ENCODE measurements at regions of chr7 and their contacts with region 1.

Region 1: DNA sequence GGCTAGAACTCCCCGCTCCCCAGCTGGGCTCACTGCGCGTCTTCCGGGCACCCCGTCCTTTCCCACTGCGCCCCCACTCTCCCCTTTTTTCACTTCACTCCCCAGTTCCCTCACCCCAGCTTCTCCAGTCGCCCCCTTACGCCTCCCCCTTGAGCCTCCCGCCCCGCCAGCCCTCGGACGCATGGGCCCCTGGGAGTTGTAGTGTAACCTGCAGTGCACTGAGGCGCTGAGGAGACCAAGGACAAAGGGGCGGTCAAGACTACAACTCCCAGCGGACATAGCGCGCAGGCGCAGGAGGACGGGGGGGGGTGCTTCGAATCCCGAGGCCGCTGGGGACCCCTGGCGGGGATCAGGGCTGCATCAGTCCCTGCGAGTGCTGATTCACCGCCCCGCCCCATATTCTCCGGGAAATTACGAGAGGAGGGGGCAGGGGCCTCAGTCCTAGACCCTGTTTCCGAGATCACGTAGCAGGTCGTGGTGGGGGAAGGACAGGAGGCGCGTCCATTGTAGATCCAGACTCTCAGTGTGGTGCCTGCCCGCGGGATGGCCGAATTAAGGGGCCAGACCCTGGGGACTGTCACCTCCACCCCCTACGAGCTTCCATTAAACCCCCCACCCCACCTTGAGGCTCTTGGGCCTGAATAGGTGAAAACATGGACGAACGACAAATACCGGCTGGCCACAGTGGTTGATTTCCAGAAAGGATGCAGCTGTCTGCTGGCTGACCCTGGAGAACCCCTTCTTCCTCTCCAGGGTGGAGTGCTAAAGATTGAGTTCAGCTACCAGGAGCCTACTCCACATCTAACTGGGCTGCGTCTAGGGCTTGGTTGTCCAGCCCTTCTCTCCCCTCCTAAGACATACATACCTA is 554 bp upstream of the YWHAG start:
- DNase-seq: peak; percentile 85
- ATAC-seq: peak; percentile 95
- H3K4me3 ChIP-seq: peak overlapping the region; percentile 99
- H3K27ac ChIP-seq: peak overlapping the region; percentile 96
- H3K4me1 ChIP-seq: peaks cover 10% of the 10 kb centered on the region
- H3K27me3 ChIP-seq: no peaks in the 10 kb centered on the region
- CTCF ChIP-seq: peak; percentile 74 to 90 (median 80)
- EP300 ChIP-seq: no peak
- POLR2A ChIP-seq: no peak
- RAD21 ChIP-seq: peak; percentile 49; the same call in 1 of the 2 replicates

Region 2: GRCh38 chr7:75842836-75843446 is 516.4 kb before region 1 on chr7:
- CTCF ChIA-PET with region 1: no interaction called
- POLR2A ChIA-PET with region 1: no interaction called
- RAD21 ChIA-PET with region 1: no interaction called
- SMC1A ChIA-PET with region 1: no interaction called
- in situ Hi-C with region 1: no loop called
- intact Hi-C with region 1: no loop called
- DNase-seq: peak; percentile 47
- ATAC-seq: peak; percentile 95
- H3K4me3 ChIP-seq: 0 out of 2 replicates have a peak overlapping the region, but pooled peaks have one; percentile 10
- H3K27ac ChIP-seq: peak overlapping the region; percentile 72
- H3K4me1 ChIP-seq: peaks cover 12% of the 10 kb centered on the region
- H3K27me3 ChIP-seq: no peaks in the 10 kb centered on the region
- CTCF ChIP-seq: no peak
- EP300 ChIP-seq: peak in 1 of 2 experiments; percentile 66; a peak in 2 of 4 replicates
- POLR2A ChIP-seq: 0 out of 2 replicates have a peak, but pooled peaks have one; percentile 40
- RAD21 ChIP-seq: no peak; the same call in 1 of the 2 replicates

Region 3: GRCh38 chr7:76291343-76292212 is 67.8 kb before region 1 on chr7:
- CTCF ChIA-PET with region 1: interaction called, 14 read pairs
- POLR2A ChIA-PET with region 1: no interaction called
- RAD21 ChIA-PET with region 1: no interaction called
- SMC1A ChIA-PET with region 1: no interaction called
- in situ Hi-C with region 1: no loop called
- intact Hi-C with region 1: no loop called
- DNase-seq: peak; percentile 77
- ATAC-seq: peak; percentile 93
- H3K4me3 ChIP-seq: no peak overlapping the region
- H3K27ac ChIP-seq: peak overlapping the region; percentile 13
- H3K4me1 ChIP-seq: peaks cover 6% of the 10 kb centered on the region
- H3K27me3 ChIP-seq: no peaks in the 10 kb centered on the region
- CTCF ChIP-seq: peak; percentile 95 to 98 (median 98); a peak in 5 of 6 replicates
- EP300 ChIP-seq: 0 out of 4 replicates have a peak, but pooled peaks of 1 of the 2 experiments have one; percentile 16
- POLR2A ChIP-seq: no peak
- RAD21 ChIP-seq: peak; percentile 81

Region 4: GRCh38 chr7:76327610-76328009 is 31.7 kb before region 1 on chr7:
- CTCF ChIA-PET with region 1: interaction called, 12 read pairs
- POLR2A ChIA-PET with region 1: interaction called, 4 read pairs
- RAD21 ChIA-PET with region 1: interaction called, 3 read pairs
- SMC1A ChIA-PET with region 1: interaction called, 7 read pairs
- in situ Hi-C with region 1: no loop called
- intact Hi-C with region 1: no loop called
- DNase-seq: no peak
- ATAC-seq: no peak
- H3K4me3 ChIP-seq: no peak overlapping the region
- H3K27ac ChIP-seq: no peak overlapping the region
- H3K4me1 ChIP-seq: no peaks in the 10 kb centered on the region
- H3K27me3 ChIP-seq: no peaks in the 10 kb centered on the region
- CTCF ChIP-seq: no peak
- EP300 ChIP-seq: no peak
- POLR2A ChIP-seq: no peak
- RAD21 ChIP-seq: no peak

Region 5: GRCh38 chr7:76377186-76377918 is 18.0 kb after region 1 on chr7:
- CTCF ChIA-PET with region 1: interaction called, 4 read pairs
- POLR2A ChIA-PET with region 1: interaction called, 7 read pairs
- RAD21 ChIA-PET with region 1: interaction called, 5 read pairs
- SMC1A ChIA-PET with region 1: interaction called, 12 read pairs
- in situ Hi-C with region 1: no loop called
- intact Hi-C with region 1: no loop called
- DNase-seq: no peak
- ATAC-seq: no peak
- H3K4me3 ChIP-seq: no peak overlapping the region
- H3K27ac ChIP-seq: no peak overlapping the region
- H3K4me1 ChIP-seq: peaks cover 3% of the 10 kb centered on the region
- H3K27me3 ChIP-seq: no peaks in the 10 kb centered on the region
- CTCF ChIP-seq: no peak
- EP300 ChIP-seq: no peak
- POLR2A ChIP-seq: no peak
- RAD21 ChIP-seq: no peak